GM10248 (cell line): ENCODE measurements at regions of chr11 and their contacts with region 1.

Region 1: DNA sequence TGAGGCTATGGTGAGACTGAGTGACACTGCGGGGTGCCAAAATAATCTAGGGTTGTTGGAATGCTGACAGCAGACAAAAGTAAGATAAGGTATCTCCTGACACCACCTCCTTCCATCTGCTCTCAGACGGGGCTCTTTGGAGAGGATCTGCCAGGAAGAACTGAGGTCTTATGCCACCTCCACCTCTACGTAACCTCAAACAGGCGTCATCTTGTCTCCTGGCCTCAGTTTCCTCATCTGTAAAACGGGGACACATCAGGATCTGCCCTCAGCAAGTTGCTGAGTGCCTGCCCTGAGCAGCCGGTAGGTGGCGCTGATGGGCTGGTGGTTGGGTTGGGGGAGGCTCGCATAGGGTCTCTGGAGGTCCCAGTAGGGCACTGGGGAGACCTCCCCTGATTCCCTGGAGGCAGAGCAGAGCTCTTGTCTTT is 1.7 kb upstream of the MYEOV start:
- DNase-seq: no peak
- CTCF ChIP-seq: peak; percentile 79

Region 2: GRCh38 chr11:69307871-69308431 is 15.7 kb after region 1 on chr11:
- CTCF ChIA-PET with region 1: interaction called, 12 read pairs
- POLR2A ChIA-PET with region 1: interaction called, 3 read pairs
- DNase-seq: no peak
- CTCF ChIP-seq: no peak